Endothelial cell of umbilical vein (primary cell): ENCODE measurements at regions of chr9 and their contacts with region 1.

Region 1: DNA sequence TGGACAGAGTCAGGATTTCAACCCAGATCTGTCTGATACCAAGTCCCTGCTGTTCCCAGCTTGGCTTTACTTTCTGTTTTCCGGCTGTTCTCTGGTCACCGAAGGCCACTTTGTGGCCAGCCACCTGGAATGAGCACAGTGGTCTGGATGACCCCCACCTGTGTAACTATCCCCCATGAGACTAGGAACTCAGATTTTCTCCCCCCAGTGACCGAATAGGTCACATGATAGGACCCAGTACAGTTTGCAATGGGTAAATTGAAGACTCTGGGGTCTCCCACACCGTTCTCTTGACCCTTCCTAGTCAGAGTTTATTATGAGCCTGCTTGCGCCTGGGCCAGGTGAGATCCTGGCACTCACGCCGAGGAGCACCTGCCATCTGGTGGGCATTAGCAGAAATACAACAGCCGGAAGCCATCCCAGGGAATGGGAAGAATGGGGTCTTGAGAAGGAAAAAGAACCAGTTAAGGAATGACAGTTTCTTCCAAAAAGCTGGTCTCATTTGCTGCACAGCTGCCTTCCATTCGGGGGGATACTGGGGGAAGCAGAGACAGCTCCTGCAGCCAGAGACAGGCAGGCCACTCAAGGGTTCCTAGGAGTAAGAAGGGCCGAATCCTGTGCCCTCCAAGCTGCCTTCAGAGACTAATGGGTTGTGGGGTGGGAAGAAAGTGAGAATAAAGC is 7.1 kb downstream of the PHYHD1 start:
- DNase-seq: peak; percentile 65
- H3K4me3 ChIP-seq: no peak overlapping the region
- H3K27ac ChIP-seq: no peak overlapping the region
- H3K4me1 ChIP-seq: no peaks in the 10 kb centered on the region
- H3K27me3 ChIP-seq: no peaks in the 10 kb centered on the region
- CTCF ChIP-seq: peak; percentile 74 to 79
- POLR2A ChIP-seq: no peak

Region 2: GRCh38 chr9:128733256-128733655 is 194.6 kb before region 1 on chr9:
- CTCF ChIA-PET with region 1: interaction called, 5 read pairs
- POLR2A ChIA-PET with region 1: no interaction called
- dilution Hi-C with region 1: no loop called
- intact Hi-C with region 1: loop called (anchors 1 kb)
- DNase-seq: peak; percentile 88
- H3K4me3 ChIP-seq: no peak overlapping the region
- H3K27ac ChIP-seq: no peak overlapping the region
- H3K4me1 ChIP-seq: no peaks in the 10 kb centered on the region
- H3K27me3 ChIP-seq: no peaks in the 10 kb centered on the region
- CTCF ChIP-seq: peak; percentile 75 to 85
- POLR2A ChIP-seq: no peak

Region 3: GRCh38 chr9:128846680-128847030 is 81.2 kb before region 1 on chr9:
- CTCF ChIA-PET with region 1: interaction called, 30 read pairs
- POLR2A ChIA-PET with region 1: no interaction called
- dilution Hi-C with region 1: no loop called
- intact Hi-C with region 1: no loop called
- DNase-seq: no peak
- H3K4me3 ChIP-seq: no peak overlapping the region
- H3K27ac ChIP-seq: no peak overlapping the region
- H3K4me1 ChIP-seq: no peaks in the 10 kb centered on the region
- H3K27me3 ChIP-seq: no peaks in the 10 kb centered on the region
- CTCF ChIP-seq: no peak
- POLR2A ChIP-seq: no peak

Region 4: DNA sequence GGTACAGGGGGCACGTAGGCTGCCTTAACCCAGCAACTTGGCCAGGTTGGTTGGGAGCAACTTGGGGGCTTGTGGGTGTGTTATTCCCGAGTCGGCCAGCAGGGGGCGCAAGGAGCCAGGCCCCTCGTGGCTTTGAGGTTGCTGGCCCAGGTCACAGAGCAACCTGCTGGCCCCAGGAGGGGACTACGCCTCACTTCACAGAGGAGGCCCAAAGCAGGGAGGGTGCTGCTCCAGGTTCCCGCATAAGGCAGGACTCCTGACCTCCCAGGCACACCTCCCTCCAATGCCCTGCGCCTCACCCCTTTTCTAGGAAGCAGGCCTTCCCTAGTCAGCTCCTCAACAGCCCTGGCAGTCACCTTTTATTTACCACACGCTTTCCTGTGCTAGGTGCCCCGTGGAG is 64.2 kb before region 1 on chr9:
- CTCF ChIA-PET with region 1: interaction called, 146 read pairs
- POLR2A ChIA-PET with region 1: interaction called, 3 read pairs
- dilution Hi-C with region 1: no loop called
- intact Hi-C with region 1: loop called (anchors 1 kb)
- DNase-seq: peak; percentile 69
- H3K4me3 ChIP-seq: no peak overlapping the region
- H3K27ac ChIP-seq: no peak overlapping the region
- H3K4me1 ChIP-seq: no peaks in the 10 kb centered on the region
- H3K27me3 ChIP-seq: no peaks in the 10 kb centered on the region
- CTCF ChIP-seq: peak; percentile 73 to 97
- POLR2A ChIP-seq: no peak

Region 5: GRCh38 chr9:128875790-128876160 is 52.1 kb before region 1 on chr9:
- CTCF ChIA-PET with region 1: interaction called, 16 read pairs
- POLR2A ChIA-PET with region 1: interaction called, 10 read pairs
- dilution Hi-C with region 1: no loop called
- intact Hi-C with region 1: loop called (anchors 5 kb)
- DNase-seq: no peak
- H3K4me3 ChIP-seq: no peak overlapping the region
- H3K27ac ChIP-seq: no peak overlapping the region
- H3K4me1 ChIP-seq: peaks cover 6% of the 10 kb centered on the region
- H3K27me3 ChIP-seq: no peaks in the 10 kb centered on the region
- CTCF ChIP-seq: no peak
- POLR2A ChIP-seq: no peak

Region 6: GRCh38 chr9:128881901-128882681 is 45.8 kb before region 1 on chr9 and contains the starts of genes KYAT1 and LRRC8A:
- CTCF ChIA-PET with region 1: interaction called, 16 read pairs
- POLR2A ChIA-PET with region 1: interaction called, 10 read pairs
- dilution Hi-C with region 1: no loop called
- intact Hi-C with region 1: loop called (anchors 5 kb)
- DNase-seq: peak; percentile 96
- H3K4me3 ChIP-seq: peak within 1 kb of the TSS; percentile 83 to 91 (median 90)
- H3K27ac ChIP-seq: peak within 1 kb of the TSS; percentile 77
- H3K4me1 ChIP-seq: peaks cover 41% of the 10 kb centered on the region
- H3K27me3 ChIP-seq: no peaks in the 10 kb centered on the region
- CTCF ChIP-seq: no peak
- POLR2A ChIP-seq: peak; percentile 98
- total RNA-seq, gene KYAT1: 7.2 and 8.0 TPM in 2 replicates
- total RNA-seq, gene LRRC8A: 99.6 and 126 TPM in 2 replicates

Region 7: DNA sequence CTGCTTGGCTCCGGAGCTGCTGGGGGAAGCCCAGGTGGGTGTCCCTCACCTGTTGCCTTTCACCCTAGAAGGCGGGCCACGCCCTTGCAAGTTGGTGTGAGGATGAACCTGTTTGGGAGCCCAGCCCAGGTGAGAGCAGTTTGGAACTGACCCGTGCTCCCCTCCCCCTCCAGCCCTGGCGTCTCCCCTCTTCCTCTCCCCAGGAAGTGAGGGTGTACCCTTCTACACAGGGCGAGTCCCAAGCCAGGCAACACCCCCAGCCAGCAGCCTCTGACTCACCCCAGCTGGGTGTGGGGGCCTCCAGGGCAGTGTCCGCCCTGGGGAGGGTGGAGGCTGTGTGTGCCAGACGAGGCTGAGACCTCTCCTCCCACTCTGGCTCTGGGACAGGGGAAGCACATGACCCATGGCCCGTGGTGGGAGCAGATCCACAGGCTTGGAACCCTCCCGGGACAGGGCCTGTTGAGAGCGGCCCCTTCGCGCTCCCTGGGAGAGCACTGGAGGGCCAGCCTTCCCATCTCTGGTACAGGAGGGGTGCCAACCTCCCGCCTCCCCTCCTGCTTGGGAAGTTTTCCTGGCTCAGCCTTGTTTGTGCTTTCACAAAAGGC is 35.5 kb before region 1 on chr9:
- CTCF ChIA-PET with region 1: interaction called, 10 read pairs
- POLR2A ChIA-PET with region 1: no interaction called
- dilution Hi-C with region 1: no loop called
- intact Hi-C with region 1: no loop called
- DNase-seq: peak; percentile 82
- H3K4me3 ChIP-seq: no peak overlapping the region
- H3K27ac ChIP-seq: peak overlapping the region; percentile 75
- H3K4me1 ChIP-seq: peaks cover 34% of the 10 kb centered on the region
- H3K27me3 ChIP-seq: no peaks in the 10 kb centered on the region
- CTCF ChIP-seq: no peak
- POLR2A ChIP-seq: no peak

Region 8: DNA sequence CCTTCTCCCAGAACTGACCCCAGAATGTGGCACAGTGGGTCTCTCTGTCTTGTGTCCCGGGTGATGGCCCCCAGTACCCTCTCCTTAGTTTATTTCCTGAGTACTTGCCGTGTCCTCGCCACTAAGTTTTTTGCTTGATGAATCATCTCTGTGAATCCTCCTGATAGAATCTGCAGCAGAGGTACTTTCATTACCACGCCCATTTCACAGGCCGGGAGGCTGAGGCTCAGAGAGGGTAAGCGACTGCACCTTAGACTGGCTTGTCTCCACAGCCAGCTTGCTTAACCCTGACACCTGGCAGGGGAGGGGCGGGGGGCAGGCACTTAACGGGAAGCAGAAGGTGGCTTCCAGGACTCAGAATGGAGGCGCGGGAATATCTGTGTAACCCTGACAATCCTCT is 258.1 kb after region 1 on chr9:
- CTCF ChIA-PET with region 1: no interaction called
- POLR2A ChIA-PET with region 1: no interaction called
- dilution Hi-C with region 1: no loop called
- intact Hi-C with region 1: no loop called
- DNase-seq: no peak
- H3K4me3 ChIP-seq: no peak overlapping the region
- H3K27ac ChIP-seq: no peak overlapping the region
- H3K4me1 ChIP-seq: no peaks in the 10 kb centered on the region
- H3K27me3 ChIP-seq: no peaks in the 10 kb centered on the region
- CTCF ChIP-seq: no peak
- POLR2A ChIP-seq: no peak